HEK293 (cell line): ENCODE measurements at regions of chr3 and their contacts with region 1.

Region 1: DNA sequence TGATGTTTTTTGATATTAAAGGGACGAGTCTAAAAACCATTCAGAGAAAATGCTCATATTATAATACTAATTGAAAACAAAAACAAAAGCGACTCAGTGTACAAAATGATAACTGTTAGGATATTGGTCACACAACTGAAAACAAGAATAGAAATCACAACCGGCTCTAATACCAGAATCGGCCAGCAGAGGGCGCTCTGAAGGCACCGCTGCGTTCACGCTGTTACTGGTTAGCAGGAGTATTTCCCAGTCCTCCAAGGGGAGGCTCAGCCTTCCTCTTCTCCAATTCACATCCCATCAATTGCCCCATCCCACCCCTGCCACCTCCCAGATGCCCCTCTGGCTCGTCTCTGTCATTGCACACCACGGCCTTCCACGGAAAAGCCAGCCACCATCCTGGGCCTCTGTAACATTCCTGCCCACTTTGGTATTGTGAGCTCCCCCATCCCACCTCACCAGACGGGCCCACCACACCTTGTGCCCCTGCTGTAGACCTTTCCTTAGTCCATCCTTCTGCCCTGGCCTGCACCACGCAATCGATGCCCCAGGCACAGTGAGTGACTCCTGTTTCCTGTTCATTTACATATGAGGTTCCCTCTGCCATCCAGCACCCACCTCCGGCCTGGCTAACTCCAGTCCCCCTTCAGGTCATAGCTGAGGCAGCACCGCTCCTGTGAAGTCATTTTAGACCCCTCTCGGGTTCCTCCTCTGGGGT is 8.5 kb downstream of the FAM107A start:
- H3K4me3 ChIP-seq: no peak overlapping the region
- H3K27ac ChIP-seq: no peak overlapping the region
- H3K4me1 ChIP-seq: no peaks in the 10 kb centered on the region
- CTCF ChIP-seq: peak; percentile 62

Region 2: GRCh38 chr3:58188173-58188564 is 380.6 kb before region 1 on chr3:
- CTCF ChIA-PET with region 1: no interaction called
- POLR2A ChIA-PET with region 1: no interaction called
- H3K4me3 ChIP-seq: no peak overlapping the region
- H3K27ac ChIP-seq: no peak overlapping the region
- H3K4me1 ChIP-seq: no peaks in the 10 kb centered on the region; the same call in 1 of the 2 replicates
- CTCF ChIP-seq: no peak

Region 3: DNA sequence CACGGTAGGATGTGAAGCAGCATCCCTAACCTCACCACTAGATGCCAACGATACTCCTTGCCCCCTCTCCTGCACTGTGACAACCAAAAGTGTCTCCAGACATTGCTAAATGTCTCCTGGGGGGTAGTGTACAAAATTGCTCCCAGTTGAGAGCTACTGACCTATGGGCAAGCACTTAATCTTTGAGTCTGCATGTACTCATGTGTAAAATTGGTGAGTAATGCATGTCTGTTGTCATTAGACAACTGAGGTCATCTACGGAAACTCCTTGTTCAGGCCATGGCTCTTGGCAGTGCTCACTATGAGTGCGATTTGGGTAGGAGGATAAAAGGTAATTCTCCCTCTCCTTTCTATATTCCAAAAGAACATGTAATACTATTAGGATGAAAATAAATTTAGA is 164.3 kb before region 1 on chr3:
- CTCF ChIA-PET with region 1: no interaction called
- POLR2A ChIA-PET with region 1: no interaction called
- H3K4me3 ChIP-seq: no peak overlapping the region
- H3K27ac ChIP-seq: no peak overlapping the region
- H3K4me1 ChIP-seq: peaks cover 3% of the 10 kb centered on the region; the same call in 1 of the 2 replicates
- CTCF ChIP-seq: no peak

Region 4: GRCh38 chr3:58522759-58523425 is 45.8 kb before region 1 on chr3:
- CTCF ChIA-PET with region 1: no interaction called
- POLR2A ChIA-PET with region 1: no interaction called
- H3K4me3 ChIP-seq: no peak overlapping the region
- H3K27ac ChIP-seq: no peak overlapping the region
- H3K4me1 ChIP-seq: no peaks in the 10 kb centered on the region; the same call in 1 of the 2 replicates
- CTCF ChIP-seq: no peak

Region 5: GRCh38 chr3:58581328-58582091 is 12.8 kb after region 1 on chr3:
- CTCF ChIA-PET with region 1: interaction called, 11 read pairs
- POLR2A ChIA-PET with region 1: no interaction called
- H3K4me3 ChIP-seq: no peak overlapping the region
- H3K27ac ChIP-seq: no peak overlapping the region
- H3K4me1 ChIP-seq: 0 out of 2 replicates have a peak, but pooled peaks cover 3% of the 10 kb centered on the region
- CTCF ChIP-seq: no peak

Region 6: DNA sequence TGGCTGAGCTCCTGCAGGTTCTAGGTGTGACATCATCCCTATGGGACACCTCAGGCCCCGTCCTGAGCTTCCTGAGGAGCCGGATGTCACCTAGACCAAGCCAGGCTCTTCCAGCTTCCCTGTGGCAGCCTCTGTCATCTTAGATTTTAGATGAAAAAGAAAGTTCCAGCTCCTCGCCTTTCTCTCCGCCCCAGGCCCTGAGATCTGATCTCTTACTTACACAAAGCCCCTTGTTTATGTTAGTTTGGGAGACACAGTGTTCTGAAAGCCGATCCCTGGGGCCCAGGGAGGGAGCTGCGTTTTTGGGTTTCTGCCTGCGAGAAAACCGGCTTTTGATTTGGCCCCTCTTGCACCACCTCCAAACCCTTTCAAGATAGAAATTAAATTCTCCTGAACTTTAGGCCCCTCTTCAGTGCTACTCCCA is 48.6 kb after region 1 on chr3:
- CTCF ChIA-PET with region 1: interaction called, 22 read pairs
- POLR2A ChIA-PET with region 1: no interaction called
- H3K4me3 ChIP-seq: no peak overlapping the region
- H3K27ac ChIP-seq: no peak overlapping the region
- H3K4me1 ChIP-seq: no peaks in the 10 kb centered on the region
- CTCF ChIP-seq: no peak

Region 7: GRCh38 chr3:58630076-58630709 is 61.5 kb after region 1 on chr3:
- CTCF ChIA-PET with region 1: interaction called, 159 read pairs
- POLR2A ChIA-PET with region 1: no interaction called
- H3K4me3 ChIP-seq: no peak overlapping the region
- H3K27ac ChIP-seq: no peak overlapping the region
- H3K4me1 ChIP-seq: no peaks in the 10 kb centered on the region
- CTCF ChIP-seq: peak; percentile 38; the same call in 1 of the 2 replicates